HepG2 (cell line): ENCODE measurements at regions of chr20 and their contacts with region 1.

Region 1: GRCh38 chr20:18466894-18467730 is at the starts of genes DZANK1 and POLR3F:
- DNase-seq: peak; percentile 97
- ATAC-seq: peak; percentile 99
- H3K4me3 ChIP-seq: peak within 1 kb of the TSS; percentile 79 to 91 (median 83)
- H3K27ac ChIP-seq: peak within 1 kb of the TSS; percentile 88
- H3K4me1 ChIP-seq: peaks cover 27% of the 10 kb centered on the region
- H3K27me3 ChIP-seq: no peaks in the 10 kb centered on the region; a peak in 1 of 5 replicates
- CTCF ChIP-seq: peak; percentile 27
- EP300 ChIP-seq: 0 out of 4 replicates have a peak, but pooled peaks of 1 of the 2 experiments have one; percentile 21
- POLR2A ChIP-seq: peak; percentile 83 to 96
- RAD21 ChIP-seq: peak; percentile 53; the same call in 1 of the 2 replicates
- total RNA-seq, gene DZANK1: 1.4 and 1.6 TPM in 2 replicates
- total RNA-seq, gene POLR3F: 25.5 and 31.2 TPM in 2 replicates

Region 2: GRCh38 chr20:18323705-18324104 is 143.4 kb before region 1 on chr20:
- CTCF ChIA-PET with region 1: no interaction called
- POLR2A ChIA-PET with region 1: no interaction called
- in situ Hi-C with region 1: no loop called
- intact Hi-C with region 1: loop called (anchors 10 kb)
- DNase-seq: no peak
- ATAC-seq: no peak
- H3K4me3 ChIP-seq: no peak overlapping the region
- H3K27ac ChIP-seq: peak overlapping the region; percentile 74
- H3K4me1 ChIP-seq: peaks cover 42% of the 10 kb centered on the region
- H3K27me3 ChIP-seq: no peaks in the 10 kb centered on the region
- CTCF ChIP-seq: no peak
- EP300 ChIP-seq: no peak
- POLR2A ChIP-seq: no peak
- RAD21 ChIP-seq: no peak

Region 3: GRCh38 chr20:18412221-18412901 is 54.8 kb before region 1 on chr20:
- CTCF ChIA-PET with region 1: no interaction called
- POLR2A ChIA-PET with region 1: no interaction called
- in situ Hi-C with region 1: no loop called
- intact Hi-C with region 1: loop called (anchors 1 kb)
- DNase-seq: no peak
- ATAC-seq: no peak
- H3K4me3 ChIP-seq: no peak overlapping the region
- H3K27ac ChIP-seq: no peak overlapping the region
- H3K4me1 ChIP-seq: peaks cover 13% of the 10 kb centered on the region
- H3K27me3 ChIP-seq: no peaks in the 10 kb centered on the region
- CTCF ChIP-seq: no peak
- EP300 ChIP-seq: no peak
- POLR2A ChIP-seq: no peak
- RAD21 ChIP-seq: no peak

Region 4: DNA sequence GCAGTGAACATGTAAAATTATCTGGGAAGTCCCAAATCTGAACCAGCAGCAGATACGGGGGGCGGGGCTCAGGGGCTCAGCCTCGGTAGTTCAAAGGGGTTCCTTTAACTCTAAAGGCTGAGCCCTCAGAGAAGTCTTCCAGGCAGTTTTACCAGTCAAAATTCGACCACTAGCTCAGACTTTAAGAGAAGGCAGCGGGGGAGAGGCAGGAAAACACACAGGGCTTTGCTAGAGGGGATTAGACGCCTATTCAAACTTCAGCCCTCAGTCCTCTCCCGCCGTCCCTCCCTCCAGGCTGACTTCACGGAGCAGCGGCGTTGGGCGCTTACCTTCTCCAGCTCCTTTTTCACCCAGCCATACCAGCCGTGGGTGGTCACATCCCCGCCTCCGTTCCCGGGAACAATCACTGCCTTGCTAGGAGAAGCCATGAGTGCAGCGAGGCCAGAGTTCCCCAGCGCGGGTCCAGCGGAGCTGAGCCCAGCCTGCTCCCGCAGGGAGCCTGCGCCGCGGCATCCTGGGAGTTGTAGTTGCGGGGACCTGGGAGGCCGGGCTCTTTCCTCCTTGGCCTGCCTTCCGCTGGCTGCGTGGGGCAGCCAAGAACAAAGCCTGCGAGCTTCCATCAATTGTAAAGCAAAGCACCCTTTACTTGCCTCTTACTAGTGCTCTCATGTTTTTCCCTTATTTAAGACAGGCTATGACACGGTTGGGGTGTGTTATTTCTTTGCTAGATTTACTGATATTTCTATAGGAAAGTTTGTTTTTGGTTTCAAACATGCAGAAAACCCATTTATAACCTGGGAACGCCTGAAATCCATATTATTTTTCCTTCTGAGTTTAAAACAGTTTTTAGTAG is 29.9 kb after region 1 on chr20 and contains the start of gene RBBP9:
- CTCF ChIA-PET with region 1: no interaction called
- POLR2A ChIA-PET with region 1: interaction called, 37 read pairs
- in situ Hi-C with region 1: no loop called
- intact Hi-C with region 1: loop called (anchors 1 kb)
- DNase-seq: peak; percentile 84
- ATAC-seq: peak; percentile 100
- H3K4me3 ChIP-seq: peak within 1 kb of the TSS; percentile 91 to 99 (median 92)
- H3K27ac ChIP-seq: peak within 1 kb of the TSS; percentile 73
- H3K4me1 ChIP-seq: peaks cover 32% of the 10 kb centered on the region
- H3K27me3 ChIP-seq: no peaks in the 10 kb centered on the region; a peak in 1 of 5 replicates
- CTCF ChIP-seq: peak; percentile 29; the same call in 1 of the 2 replicates
- EP300 ChIP-seq: peak; percentile 31 to 35; a peak in 1 of 4 replicates
- POLR2A ChIP-seq: peak; percentile 92 to 97
- RAD21 ChIP-seq: peak; percentile 51; the same call in 1 of the 2 replicates
- total RNA-seq, gene RBBP9: 56.3 and 99.5 TPM in 2 replicates

Region 5: DNA sequence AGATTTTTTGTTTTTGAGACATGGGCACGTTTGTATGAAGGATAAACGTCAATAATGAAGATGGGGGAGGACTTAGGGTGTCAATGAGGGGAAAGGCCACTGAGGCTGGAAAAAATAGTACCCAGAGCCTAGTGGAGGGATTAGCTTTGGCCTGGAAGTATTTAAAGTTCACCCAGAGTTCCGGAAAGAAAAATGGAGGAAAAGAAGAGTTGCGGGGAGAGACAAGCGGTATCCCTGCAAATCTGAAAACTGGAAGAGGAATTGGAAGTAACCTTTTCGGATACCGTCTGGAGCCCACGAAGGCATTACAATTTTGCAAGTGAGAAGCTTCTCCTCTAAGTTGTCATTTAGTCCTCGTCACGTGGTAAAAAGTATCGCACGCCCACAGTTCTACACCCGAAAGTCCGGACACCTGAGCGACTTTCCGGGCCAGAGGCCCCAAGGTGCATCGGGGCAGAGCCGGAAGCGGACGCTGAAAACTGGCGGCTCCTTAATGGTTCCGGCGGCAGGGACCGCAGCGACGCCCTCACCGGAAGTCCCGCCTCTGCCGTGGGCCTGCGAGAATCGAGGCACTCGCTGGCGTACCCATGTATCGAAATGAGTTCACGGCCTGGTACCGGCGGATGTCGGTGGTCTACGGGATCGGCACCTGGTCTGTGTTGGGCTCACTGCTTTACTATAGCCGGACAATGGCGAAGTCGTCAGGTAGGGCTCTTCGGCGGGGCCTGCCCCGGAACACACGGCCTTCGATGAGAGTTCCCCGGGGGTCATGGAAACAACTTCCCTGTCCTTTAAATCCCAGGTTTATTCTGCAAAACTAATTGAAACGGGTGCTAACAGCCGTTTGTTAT is 100.0 kb after region 1 on chr20 and contains the start of gene SMIM26:
- CTCF ChIA-PET with region 1: no interaction called
- POLR2A ChIA-PET with region 1: interaction called, 5 read pairs
- in situ Hi-C with region 1: no loop called
- intact Hi-C with region 1: loop called (anchors 1 kb)
- DNase-seq: peak; percentile 96
- ATAC-seq: peak; percentile 99
- H3K4me3 ChIP-seq: peak within 1 kb of the TSS; percentile 69 to 97 (median 89)
- H3K27ac ChIP-seq: peak within 1 kb of the TSS; percentile 83
- H3K4me1 ChIP-seq: peaks cover 14% of the 10 kb centered on the region
- H3K27me3 ChIP-seq: no peaks in the 10 kb centered on the region; a peak in 1 of 5 replicates
- CTCF ChIP-seq: 0 out of 2 replicates have a peak, but pooled peaks have one; percentile 19
- EP300 ChIP-seq: peak in 1 of 2 experiments; percentile 54; a peak in 2 of 4 replicates
- POLR2A ChIP-seq: peak; percentile 94 to 99
- RAD21 ChIP-seq: peak; percentile 58; the same call in 1 of the 2 replicates
- total RNA-seq, gene SMIM26: 185 and 214 TPM in 2 replicates